ENCODE measurements at regions of chrX and their contacts with region 1.

Region 1: GRCh38 chrX:56729152-56729850 is at the start of gene NBDY:
- DNase-seq: no peak
- H3K4me3 ChIP-seq: peak within 1 kb of the TSS; percentile 65
- H3K27me3 ChIP-seq: no peaks in the 10 kb centered on the region
- CTCF ChIP-seq: no peak
- polyA plus RNA-seq, gene NBDY: 36.2 and 38.8 TPM in 2 replicates

Region 2: GRCh38 chrX:56281789-56282188 is 447.5 kb before region 1 on chrX:
- CTCF ChIA-PET with region 1: interaction called, 11 read pairs
- POLR2A ChIA-PET with region 1: no interaction called
- DNase-seq: no peak
- H3K4me3 ChIP-seq: no peak overlapping the region
- H3K27me3 ChIP-seq: no peaks in the 10 kb centered on the region
- CTCF ChIP-seq: 0 out of 2 replicates have a peak, but pooled peaks have one; percentile 6

Region 3: DNA sequence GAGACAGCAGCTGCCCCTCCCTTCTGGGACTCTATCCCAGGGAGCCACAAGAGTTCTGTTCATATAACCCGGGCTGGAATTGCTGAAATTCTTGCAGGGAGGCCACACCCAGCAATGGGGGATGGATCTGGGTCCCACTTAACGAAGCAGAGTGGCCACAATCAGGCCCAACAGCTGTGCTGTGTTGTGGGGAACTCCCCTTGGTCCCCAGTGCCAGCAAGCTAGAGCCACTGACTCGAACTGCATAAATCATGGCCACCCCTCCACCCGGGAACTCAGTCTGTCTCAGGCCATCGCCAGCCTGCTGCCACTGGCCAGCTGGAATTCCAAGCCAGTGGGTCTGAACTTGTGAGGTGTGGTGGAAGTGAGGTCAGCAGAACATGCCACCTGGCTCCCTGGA is 386.1 kb before region 1 on chrX:
- CTCF ChIA-PET with region 1: no interaction called
- POLR2A ChIA-PET with region 1: no interaction called
- DNase-seq: no peak
- H3K4me3 ChIP-seq: no peak overlapping the region
- H3K27me3 ChIP-seq: no peaks in the 10 kb centered on the region
- CTCF ChIP-seq: no peak